GM13976 (cell line): ENCODE measurements at regions of chr1 and their contacts with region 1.

Region 1: DNA sequence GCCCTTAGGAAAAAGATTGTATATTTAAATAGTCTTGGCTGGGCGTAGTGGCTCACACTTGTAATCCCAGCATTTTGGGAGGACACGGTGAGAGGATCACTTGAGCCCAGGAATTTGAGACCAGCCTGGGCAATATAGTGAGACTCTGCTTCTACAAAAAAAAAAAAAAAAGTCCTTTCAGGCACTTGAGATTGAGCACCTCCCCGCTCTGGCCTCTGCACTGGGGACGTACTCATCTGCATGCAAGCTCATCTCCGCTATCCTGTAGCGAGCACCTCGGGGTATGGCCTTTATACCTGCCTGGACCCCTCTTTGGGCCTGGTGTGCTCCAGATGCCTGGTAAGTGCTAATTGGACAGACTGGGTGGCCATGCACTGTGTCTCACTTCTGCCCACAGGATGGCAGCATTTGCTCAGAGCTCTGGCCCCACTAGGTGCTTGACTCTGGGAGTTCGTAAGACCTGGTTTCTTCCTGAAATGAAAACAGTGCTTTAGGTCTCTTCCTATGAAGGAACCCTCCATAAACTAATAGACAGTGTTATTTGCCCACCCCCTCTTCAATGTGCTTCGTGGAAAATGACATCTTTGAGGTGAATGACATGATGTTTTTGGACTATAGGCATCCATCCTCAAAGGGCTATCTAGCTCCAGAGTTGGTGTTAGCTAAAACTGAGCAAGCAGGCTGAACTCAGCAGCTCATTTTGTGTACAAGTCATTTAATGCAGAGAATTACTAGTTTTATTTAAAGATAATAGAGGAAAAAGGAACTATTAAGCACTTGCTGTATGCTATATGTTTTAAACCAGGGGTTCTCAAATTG is 61.7 kb upstream of the ADAR start:
- DNase-seq: peak; percentile 87
- CTCF ChIP-seq: peak; percentile 80

Region 2: DNA sequence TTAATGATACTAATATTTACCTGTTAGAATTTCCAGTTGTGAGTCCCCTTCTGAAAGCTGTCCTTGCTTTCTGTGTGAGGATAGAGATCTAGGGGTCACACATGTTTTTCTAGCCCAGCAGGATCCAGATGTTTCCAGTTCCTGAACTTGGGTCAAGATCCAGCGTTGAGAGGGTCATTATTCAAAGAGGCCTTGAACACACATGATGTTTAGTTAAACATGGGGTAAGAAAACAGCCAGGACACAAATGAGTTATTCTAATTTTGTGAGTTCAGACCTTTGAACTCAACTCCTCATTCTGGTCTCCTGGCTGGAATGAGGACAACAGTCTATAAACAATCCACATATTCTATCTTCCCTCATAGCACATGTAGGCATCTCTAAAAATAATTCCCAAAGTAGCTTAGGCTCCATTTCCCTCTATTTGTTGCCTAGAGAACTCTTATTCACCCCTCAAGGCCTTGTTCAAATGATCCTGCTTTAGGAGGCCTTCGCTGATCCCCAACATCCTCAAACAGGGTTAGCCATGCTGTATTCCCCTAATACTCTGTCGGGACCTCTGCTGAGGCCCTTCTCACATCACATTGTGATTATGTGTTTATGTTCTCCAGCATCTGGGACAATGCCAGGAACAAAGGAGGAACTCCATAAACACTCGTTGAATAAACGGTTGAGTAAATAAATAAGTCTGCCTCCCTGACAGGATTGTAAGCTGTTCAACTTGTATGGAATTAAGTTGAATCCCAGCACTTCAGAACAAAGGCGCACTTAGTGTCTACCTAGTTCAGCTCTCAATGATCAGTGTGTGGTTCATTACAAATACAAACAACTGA is 215.4 kb after region 1 on chr1:
- in situ Hi-C with region 1: loop called (anchors 5 kb)
- DNase-seq: no peak
- CTCF ChIP-seq: no peak

Region 3: DNA sequence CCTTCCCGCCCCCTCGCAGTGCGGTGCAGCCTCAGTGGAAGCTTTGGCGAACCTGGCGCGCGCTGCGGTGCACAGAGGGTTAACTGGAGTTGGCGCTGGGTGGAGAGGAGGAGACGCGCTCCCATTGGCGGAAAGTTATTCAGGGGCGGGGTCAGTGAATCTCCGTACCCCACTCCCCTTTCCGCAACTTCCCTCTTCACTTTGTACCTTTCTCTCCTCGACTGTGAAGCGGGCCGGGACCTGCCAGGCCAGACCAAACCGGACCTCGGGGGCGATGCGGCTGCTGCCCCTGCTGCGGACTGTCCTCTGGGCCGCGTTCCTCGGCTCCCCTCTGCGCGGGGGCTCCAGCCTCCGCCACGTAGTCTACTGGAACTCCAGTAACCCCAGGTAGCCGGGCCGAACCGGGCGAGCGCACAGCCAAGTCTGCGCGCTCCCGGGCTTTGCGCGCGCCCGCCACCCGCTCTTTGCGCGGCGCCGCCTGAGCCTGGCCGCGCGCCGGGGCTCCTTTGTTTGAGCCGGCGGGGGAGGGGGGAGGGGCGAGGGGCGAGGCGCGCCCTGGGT is 394.0 kb after region 1 on chr1 and contains the start of gene EFNA4:
- in situ Hi-C with region 1: loop called (anchors 10 kb)
- DNase-seq: peak; percentile 90
- CTCF ChIP-seq: no peak